Caco-2 (cell line): ENCODE measurements at regions of chr19 and their contacts with region 1.

Region 1: GRCh38 chr19:46192992-46193650 is 36.4 kb upstream of the IGFL1 start:
- DNase-seq: peak; percentile 83 to 85
- H3K4me3 ChIP-seq: no peak overlapping the region
- H3K4me3 Mint-ChIP-seq: peak overlapping the region; percentile 56
- H3K27ac Mint-ChIP-seq: peak overlapping the region; percentile 87
- H3K4me1 ChIP-seq: peaks cover 33% of the 10 kb centered on the region
- H3K4me1 Mint-ChIP-seq: peaks cover 41% of the 10 kb centered on the region
- H3K27me3 ChIP-seq: no peaks in the 10 kb centered on the region
- H3K27me3 Mint-ChIP-seq: no peaks in the 10 kb centered on the region
- CTCF ChIP-seq: no peak

Region 2: GRCh38 chr19:46202871-46203860 is 10.0 kb after region 1 on chr19:
- CTCF ChIA-PET with region 1: interaction called, 3 read pairs
- POLR2A ChIA-PET with region 1: no interaction called
- intact Hi-C with region 1: loop called (anchors 1 kb)
- DNase-seq: peak; percentile 67 to 69
- H3K4me3 ChIP-seq: no peak overlapping the region
- H3K4me3 Mint-ChIP-seq: peak overlapping the region; percentile 0
- H3K27ac Mint-ChIP-seq: peak overlapping the region; percentile 16
- H3K4me1 ChIP-seq: peaks cover 18% of the 10 kb centered on the region
- H3K4me1 Mint-ChIP-seq: peaks cover 23% of the 10 kb centered on the region
- H3K27me3 ChIP-seq: no peaks in the 10 kb centered on the region
- H3K27me3 Mint-ChIP-seq: no peaks in the 10 kb centered on the region
- CTCF ChIP-seq: no peak